ENCODE measurements at regions of chr2 and their contacts with region 1.

Region 1: GRCh38 chr2:125185691-125186270 is 1160.7 kb downstream of the CNTNAP5 start:
- DNase-seq: no peak
- H3K4me3 ChIP-seq: no peak overlapping the region
- H3K27ac ChIP-seq: no peak overlapping the region
- H3K4me1 ChIP-seq: no peaks in the 10 kb centered on the region
- H3K27me3 ChIP-seq: no peaks in the 10 kb centered on the region
- CTCF ChIP-seq: no peak
- POLR2A ChIP-seq: no peak

Region 2: DNA sequence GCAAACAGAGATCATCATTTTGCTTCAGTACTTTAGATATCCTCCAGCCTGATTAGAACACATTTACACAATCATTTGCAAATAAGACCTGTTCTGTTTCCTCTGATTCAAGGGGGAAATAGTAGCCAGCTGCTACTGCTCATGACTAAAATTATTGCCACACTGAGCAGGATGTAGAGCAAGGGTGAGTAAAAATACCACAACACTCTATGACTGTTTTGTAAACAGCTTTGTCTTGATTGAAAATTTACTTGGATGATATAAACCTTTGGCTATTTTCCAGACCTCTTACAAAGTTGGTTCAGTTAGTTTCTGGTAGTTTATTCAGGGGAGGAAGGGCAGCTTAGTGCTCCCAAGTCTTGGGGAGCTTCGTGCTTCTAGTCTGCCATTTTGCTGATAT is 1447.1 kb before region 1 on chr2:
- intact Hi-C with region 1: loop called (anchors 5 kb)
- DNase-seq: no peak
- H3K4me3 ChIP-seq: no peak overlapping the region
- H3K27ac ChIP-seq: no peak overlapping the region
- H3K4me1 ChIP-seq: no peaks in the 10 kb centered on the region
- H3K27me3 ChIP-seq: no peaks in the 10 kb centered on the region
- CTCF ChIP-seq: no peak
- POLR2A ChIP-seq: no peak